MCF 10A (cell line): ENCODE measurements at regions of chr15 and their contacts with region 1.

Region 1: DNA sequence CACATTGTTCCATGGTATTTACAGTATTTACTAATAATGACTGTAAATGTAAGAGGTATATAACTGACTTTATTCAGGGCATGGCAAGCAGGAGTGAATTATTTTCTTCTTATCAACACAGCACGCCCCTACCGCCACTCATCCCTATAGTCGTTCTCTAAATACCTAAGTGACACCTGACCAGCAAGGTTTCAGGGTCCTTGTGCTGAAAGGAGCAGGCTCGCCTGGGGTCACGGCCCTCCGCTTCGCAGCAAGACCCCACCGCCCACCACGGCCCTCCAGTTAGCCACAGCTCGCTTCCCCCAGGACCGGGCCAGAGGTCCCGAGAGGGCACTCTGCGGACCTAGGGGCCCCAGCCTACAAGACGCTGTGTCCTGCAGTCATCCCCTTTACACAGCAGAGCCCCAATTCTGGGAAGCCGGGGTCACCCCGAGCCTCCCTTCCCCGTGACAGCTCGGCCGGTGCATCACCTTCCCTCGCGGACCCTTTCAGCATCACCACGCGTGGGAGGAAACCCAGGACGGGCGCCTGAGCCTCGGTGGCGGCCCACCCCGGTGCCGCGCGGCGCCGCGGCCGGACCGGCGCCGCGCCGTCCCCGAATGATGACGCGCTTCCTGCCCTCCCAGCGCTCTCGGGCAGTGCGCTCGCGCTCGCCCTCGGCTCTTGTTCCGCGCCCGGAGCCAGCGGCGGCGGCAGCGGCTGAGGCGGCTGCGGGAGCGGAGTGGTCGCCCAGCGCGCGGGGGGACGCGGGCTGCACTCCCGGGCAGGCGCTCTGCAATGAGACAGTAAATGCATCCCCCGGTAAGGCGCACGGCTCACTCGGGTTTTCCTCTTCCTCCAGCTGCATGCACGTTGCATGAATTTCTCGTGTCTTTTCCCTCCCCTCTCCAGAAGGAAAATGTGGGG is 225.1 kb upstream of the C2CD4B start:
- DNase-seq: peak; percentile 67
- H3K4me3 Mint-ChIP-seq: peak within 1 kb of the TSS; percentile 90
- H3K27ac Mint-ChIP-seq: peak within 1 kb of the TSS; percentile 88
- H3K4me1 Mint-ChIP-seq: peaks cover 9% of the 10 kb centered on the region
- H3K27me3 Mint-ChIP-seq: peaks cover 3% of the 10 kb centered on the region
- CTCF ChIP-seq: no peak

Region 2: GRCh38 chr15:62444104-62445022 is 54.2 kb after region 1 on chr15:
- CTCF ChIA-PET with region 1: interaction called, 3 read pairs
- POLR2A ChIA-PET with region 1: interaction called, 10 read pairs
- intact Hi-C with region 1: no loop called
- DNase-seq: peak; percentile 84
- H3K4me3 Mint-ChIP-seq: no peak overlapping the region
- H3K27ac Mint-ChIP-seq: peak overlapping the region; percentile 49
- H3K4me1 Mint-ChIP-seq: peaks cover 15% of the 10 kb centered on the region
- H3K27me3 Mint-ChIP-seq: no peaks in the 10 kb centered on the region
- CTCF ChIP-seq: no peak

Region 3: DNA sequence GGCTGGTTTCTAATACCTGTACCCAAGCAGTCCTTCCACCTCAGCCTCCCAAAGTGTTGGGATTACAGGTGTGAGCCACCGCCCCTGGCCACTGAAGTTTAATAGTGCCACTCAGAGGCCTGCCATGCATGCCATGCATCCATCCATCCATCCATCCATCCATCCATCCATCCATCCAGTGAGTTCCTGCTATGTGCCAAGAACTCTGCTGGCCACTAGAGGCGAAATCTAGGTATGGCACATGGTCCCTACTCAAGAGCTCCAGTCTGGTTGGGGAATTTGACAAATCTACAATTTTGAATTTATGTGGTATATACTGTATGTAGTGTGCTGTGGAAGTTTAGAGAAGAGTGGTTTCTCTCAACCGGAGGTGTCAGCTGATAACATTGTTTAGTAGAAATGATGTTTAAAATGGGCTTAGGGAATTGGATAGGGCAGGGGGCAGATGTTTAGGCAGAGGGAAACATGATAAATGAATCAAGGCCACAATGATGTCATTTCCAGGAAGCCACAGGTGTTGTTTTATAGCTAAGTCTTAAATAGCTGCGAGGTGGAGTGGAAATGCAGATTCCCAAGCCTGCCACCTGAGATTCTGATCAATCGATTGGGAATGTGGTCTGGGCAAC is 159.3 kb after region 1 on chr15:
- CTCF ChIA-PET with region 1: interaction called, 3 read pairs
- POLR2A ChIA-PET with region 1: no interaction called
- intact Hi-C with region 1: loop called (anchors 5 kb)
- DNase-seq: peak; percentile 59
- H3K4me3 Mint-ChIP-seq: no peak overlapping the region
- H3K27ac Mint-ChIP-seq: no peak overlapping the region
- H3K4me1 Mint-ChIP-seq: peaks cover 13% of the 10 kb centered on the region
- H3K27me3 Mint-ChIP-seq: no peaks in the 10 kb centered on the region
- CTCF ChIP-seq: peak; percentile 54

Region 4: DNA sequence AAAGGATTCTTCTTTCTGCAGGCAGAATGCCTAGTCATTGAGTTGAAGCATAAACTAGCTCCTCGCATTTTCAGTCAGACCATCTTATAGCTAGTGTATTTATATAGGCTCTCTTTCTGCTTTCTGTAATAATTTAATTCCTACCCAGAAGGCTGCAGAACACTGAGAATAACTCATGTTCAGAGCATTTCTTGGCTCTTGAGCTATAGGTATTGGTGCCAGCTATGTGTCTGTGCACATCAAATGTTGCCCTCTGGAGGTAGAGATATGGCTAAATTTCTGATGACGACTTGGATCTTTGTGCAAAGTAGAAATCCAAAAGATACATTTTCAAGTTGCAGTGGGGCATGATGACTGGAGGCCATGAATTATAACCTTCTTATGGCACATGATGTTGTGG is 316.2 kb after region 1 on chr15:
- CTCF ChIA-PET with region 1: interaction called, 4 read pairs
- POLR2A ChIA-PET with region 1: no interaction called
- intact Hi-C with region 1: loop called (anchors 1 kb)
- DNase-seq: peak; percentile 5
- H3K4me3 Mint-ChIP-seq: no peak overlapping the region
- H3K27ac Mint-ChIP-seq: no peak overlapping the region
- H3K4me1 Mint-ChIP-seq: no peaks in the 10 kb centered on the region
- H3K27me3 Mint-ChIP-seq: no peaks in the 10 kb centered on the region
- CTCF ChIP-seq: no peak

Region 5: GRCh38 chr15:62758126-62758951 is 368.2 kb after region 1 on chr15:
- CTCF ChIA-PET with region 1: interaction called, 6 read pairs
- POLR2A ChIA-PET with region 1: interaction called, 14 read pairs
- intact Hi-C with region 1: loop called (anchors 5 kb)
- DNase-seq: peak; percentile 86
- H3K4me3 Mint-ChIP-seq: peak overlapping the region; percentile 47
- H3K27ac Mint-ChIP-seq: peak overlapping the region; percentile 74
- H3K4me1 Mint-ChIP-seq: peaks cover 30% of the 10 kb centered on the region
- H3K27me3 Mint-ChIP-seq: no peaks in the 10 kb centered on the region
- CTCF ChIP-seq: no peak

Region 6: GRCh38 chr15:63093486-63094205 is 703.5 kb after region 1 on chr15:
- CTCF ChIA-PET with region 1: no interaction called
- POLR2A ChIA-PET with region 1: no interaction called
- intact Hi-C with region 1: loop called (anchors 5 kb)
- DNase-seq: peak; percentile 82
- H3K4me3 Mint-ChIP-seq: no peak overlapping the region
- H3K27ac Mint-ChIP-seq: no peak overlapping the region
- H3K4me1 Mint-ChIP-seq: peaks cover 7% of the 10 kb centered on the region
- H3K27me3 Mint-ChIP-seq: no peaks in the 10 kb centered on the region
- CTCF ChIP-seq: peak; percentile 85